CD8-positive, alpha-beta memory T cell (primary cell): ENCODE measurements at regions of chr19 and their contacts with region 1.

Region 1: GRCh38 chr19:8663920-8664670 is 33.7 kb downstream of the NFILZ start:
- DNase-seq: peak; percentile 15 to 55 (median 18)
- H3K4me3 ChIP-seq: peak overlapping the region; percentile 1
- H3K4me3 Mint-ChIP-seq: peak overlapping the region; percentile 34 to 81 (median 64)
- H3K27ac ChIP-seq: no peak overlapping the region
- H3K27ac Mint-ChIP-seq: peak overlapping the region; percentile 1 to 82 (median 50)
- H3K4me1 ChIP-seq: peaks cover 41% of the 10 kb centered on the region
- H3K4me1 Mint-ChIP-seq: peaks cover 51 to 62% (median 53%) of the 10 kb centered on the region in 3 donors
- H3K27me3 ChIP-seq: no peaks in the 10 kb centered on the region
- H3K27me3 Mint-ChIP-seq: no peaks in the 10 kb centered on the region

Region 2: DNA sequence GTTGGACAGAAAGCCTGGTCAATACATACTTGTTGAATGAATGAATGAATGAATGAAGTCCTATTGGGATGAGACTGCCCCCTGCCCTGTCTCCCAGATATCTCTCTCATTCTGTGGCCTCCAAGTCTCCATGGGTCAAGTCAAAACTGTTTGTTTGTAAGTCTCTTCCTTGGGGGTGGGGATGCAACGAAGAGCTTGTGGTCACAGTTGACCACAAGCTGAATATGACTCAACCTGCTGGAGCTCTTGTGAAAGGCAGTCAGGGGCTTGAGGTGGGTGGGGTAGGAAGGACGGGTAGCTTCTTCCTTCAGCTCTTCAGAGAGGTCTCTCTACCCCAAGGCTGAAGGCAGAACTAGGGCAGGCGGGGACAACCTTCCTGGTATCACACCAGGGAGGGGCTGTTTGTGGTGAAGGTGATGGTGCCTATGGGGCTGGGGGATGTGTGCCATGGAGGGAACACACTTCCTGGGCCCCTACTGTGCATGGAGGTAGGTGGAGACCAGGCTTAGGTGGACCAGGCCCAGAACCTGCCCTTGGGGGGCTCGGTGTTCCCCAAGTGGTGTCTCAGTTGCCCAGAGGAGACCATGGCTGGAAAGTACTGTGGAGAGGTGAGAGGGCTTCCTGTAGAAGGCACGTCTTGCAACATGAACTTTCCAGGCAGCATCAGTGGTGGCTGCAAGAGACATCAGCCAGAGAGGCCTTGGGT is 94.9 kb before region 1 on chr19:
- CTCF ChIA-PET with region 1: no interaction called
- POLR2A ChIA-PET with region 1: no interaction called
- DNase-seq: peak; percentile 44 to 92 (median 74)
- H3K4me3 ChIP-seq: peak overlapping the region; percentile 59
- H3K4me3 Mint-ChIP-seq: peak overlapping the region; percentile 77 to 100 (median 97)
- H3K27ac ChIP-seq: peak overlapping the region; percentile 63
- H3K27ac Mint-ChIP-seq: peak overlapping the region; percentile 74 to 99 (median 94)
- H3K4me1 ChIP-seq: peaks cover 81% of the 10 kb centered on the region
- H3K4me1 Mint-ChIP-seq: peaks cover 73 to 90% (median 78%) of the 10 kb centered on the region in 3 donors
- H3K27me3 ChIP-seq: no peaks in the 10 kb centered on the region
- H3K27me3 Mint-ChIP-seq: peaks cover 0 to 3% of the 10 kb centered on the region in 2 donors

Region 3: GRCh38 chr19:8600064-8600463 is 64.0 kb before region 1 on chr19:
- CTCF ChIA-PET with region 1: no interaction called
- POLR2A ChIA-PET with region 1: no interaction called
- DNase-seq: no peak
- H3K4me3 ChIP-seq: no peak overlapping the region
- H3K4me3 Mint-ChIP-seq: no peak overlapping the region
- H3K27ac ChIP-seq: no peak overlapping the region
- H3K27ac Mint-ChIP-seq: peak overlapping the region in 2 of 8 donors; percentile 54 to 69
- H3K4me1 ChIP-seq: no peaks in the 10 kb centered on the region
- H3K4me1 Mint-ChIP-seq: peaks cover 0 to under 1% (median under 1%) of the 10 kb centered on the region in 3 donors
- H3K27me3 ChIP-seq: no peaks in the 10 kb centered on the region
- H3K27me3 Mint-ChIP-seq: no peaks in the 10 kb centered on the region

Region 4: GRCh38 chr19:8695501-8695900 is 31.4 kb after region 1 on chr19:
- CTCF ChIA-PET with region 1: interaction called, 11 read pairs
- POLR2A ChIA-PET with region 1: no interaction called
- DNase-seq: no peak
- H3K4me3 ChIP-seq: no peak overlapping the region
- H3K4me3 Mint-ChIP-seq: no peak overlapping the region
- H3K27ac ChIP-seq: no peak overlapping the region
- H3K27ac Mint-ChIP-seq: no peak overlapping the region
- H3K4me1 ChIP-seq: peaks cover 8% of the 10 kb centered on the region
- H3K4me1 Mint-ChIP-seq: peaks cover 14 to 18% (median 16%) of the 10 kb centered on the region in 3 donors
- H3K27me3 ChIP-seq: no peaks in the 10 kb centered on the region
- H3K27me3 Mint-ChIP-seq: peaks cover 5 to 32% of the 10 kb centered on the region in 2 donors